OCI-LY7 (cell line): ENCODE measurements at regions of chr17 and their contacts with region 1.

Region 1: DNA sequence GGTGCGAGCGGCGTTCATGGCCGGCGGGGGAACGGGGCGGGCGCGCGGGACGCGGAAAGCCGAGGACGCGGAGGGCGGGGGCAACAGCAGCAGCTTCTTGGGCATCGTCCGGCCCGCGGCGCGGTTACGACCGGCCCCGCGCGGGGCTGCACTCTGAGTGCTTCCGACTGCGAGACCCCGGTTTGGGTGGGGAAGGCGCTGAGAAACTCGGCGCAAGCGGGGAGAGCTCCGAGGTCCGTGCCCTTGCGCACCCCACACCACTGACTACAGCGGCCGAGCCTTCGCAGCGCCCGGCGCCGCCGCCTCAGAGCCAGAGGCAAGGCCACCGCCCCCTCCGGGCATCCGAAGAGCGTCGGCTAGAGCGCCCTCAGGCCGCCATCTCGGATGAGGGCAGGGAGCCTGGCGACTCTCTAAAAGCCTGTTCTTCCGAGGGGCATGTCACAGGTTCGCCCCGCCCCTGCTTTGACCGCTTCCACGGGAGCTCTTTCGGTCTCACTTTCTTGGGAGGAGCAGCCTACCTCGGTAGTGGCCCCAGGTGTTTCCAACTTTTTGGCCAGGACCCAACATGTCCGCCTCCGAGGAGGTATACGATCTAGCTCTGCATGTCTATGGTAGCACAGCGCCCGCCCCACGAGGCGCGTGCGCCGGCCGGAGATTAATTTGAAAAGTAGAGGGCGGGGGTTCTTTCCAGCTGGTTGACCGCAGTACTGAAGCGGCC is at the start of gene PRPSAP1:
- DNase-seq: peak; percentile 97
- H3K4me3 ChIP-seq: peak within 1 kb of the TSS; percentile 91
- H3K27ac ChIP-seq: peak within 1 kb of the TSS; percentile 78
- H3K4me1 ChIP-seq: peaks cover 43% of the 10 kb centered on the region
- CTCF ChIP-seq: no peak
- total RNA-seq, gene PRPSAP1: 52.6 and 53.3 TPM in 2 replicates

Region 2: GRCh38 chr17:76072148-76072858 is 281.5 kb before region 1 on chr17 and contains the start of gene SRP68:
- CTCF ChIA-PET with region 1: no interaction called
- POLR2A ChIA-PET with region 1: no interaction called
- intact Hi-C with region 1: loop called (anchors 1 kb)
- DNase-seq: peak; percentile 90
- H3K4me3 ChIP-seq: peak within 1 kb of the TSS; percentile 78
- H3K27ac ChIP-seq: peak within 1 kb of the TSS; percentile 72
- H3K4me1 ChIP-seq: peaks cover 20% of the 10 kb centered on the region
- CTCF ChIP-seq: no peak
- total RNA-seq, gene SRP68: 53.5 and 54.0 TPM in 2 replicates

Region 3: DNA sequence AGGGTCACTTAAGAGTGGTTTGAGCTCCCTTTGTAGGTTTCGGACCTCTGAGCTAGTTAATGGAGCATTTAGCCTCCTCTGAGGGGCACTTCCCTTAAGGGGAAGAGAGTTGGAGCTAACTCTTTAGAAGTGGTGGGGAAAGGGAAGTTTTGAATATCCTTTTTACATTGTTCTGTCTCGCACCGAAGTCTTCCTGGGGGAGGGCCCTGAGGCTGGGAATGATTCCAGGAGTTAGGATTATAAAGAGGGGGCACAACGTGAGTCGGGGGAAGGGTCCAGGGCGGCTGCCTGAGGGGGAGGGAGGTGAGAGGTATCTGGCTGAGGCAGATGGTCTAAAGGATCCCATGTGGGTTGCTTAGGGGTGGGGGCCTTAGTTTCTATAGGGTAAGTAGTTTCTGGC is 819.3 kb after region 1 on chr17:
- CTCF ChIA-PET with region 1: no interaction called
- POLR2A ChIA-PET with region 1: interaction called, 10 read pairs
- intact Hi-C with region 1: no loop called
- DNase-seq: no peak
- H3K4me3 ChIP-seq: no peak overlapping the region
- H3K27ac ChIP-seq: no peak overlapping the region
- H3K4me1 ChIP-seq: peaks cover 7% of the 10 kb centered on the region
- CTCF ChIP-seq: no peak